ENCODE measurements at regions of chr10 and their contacts with region 1.

Region 1: DNA sequence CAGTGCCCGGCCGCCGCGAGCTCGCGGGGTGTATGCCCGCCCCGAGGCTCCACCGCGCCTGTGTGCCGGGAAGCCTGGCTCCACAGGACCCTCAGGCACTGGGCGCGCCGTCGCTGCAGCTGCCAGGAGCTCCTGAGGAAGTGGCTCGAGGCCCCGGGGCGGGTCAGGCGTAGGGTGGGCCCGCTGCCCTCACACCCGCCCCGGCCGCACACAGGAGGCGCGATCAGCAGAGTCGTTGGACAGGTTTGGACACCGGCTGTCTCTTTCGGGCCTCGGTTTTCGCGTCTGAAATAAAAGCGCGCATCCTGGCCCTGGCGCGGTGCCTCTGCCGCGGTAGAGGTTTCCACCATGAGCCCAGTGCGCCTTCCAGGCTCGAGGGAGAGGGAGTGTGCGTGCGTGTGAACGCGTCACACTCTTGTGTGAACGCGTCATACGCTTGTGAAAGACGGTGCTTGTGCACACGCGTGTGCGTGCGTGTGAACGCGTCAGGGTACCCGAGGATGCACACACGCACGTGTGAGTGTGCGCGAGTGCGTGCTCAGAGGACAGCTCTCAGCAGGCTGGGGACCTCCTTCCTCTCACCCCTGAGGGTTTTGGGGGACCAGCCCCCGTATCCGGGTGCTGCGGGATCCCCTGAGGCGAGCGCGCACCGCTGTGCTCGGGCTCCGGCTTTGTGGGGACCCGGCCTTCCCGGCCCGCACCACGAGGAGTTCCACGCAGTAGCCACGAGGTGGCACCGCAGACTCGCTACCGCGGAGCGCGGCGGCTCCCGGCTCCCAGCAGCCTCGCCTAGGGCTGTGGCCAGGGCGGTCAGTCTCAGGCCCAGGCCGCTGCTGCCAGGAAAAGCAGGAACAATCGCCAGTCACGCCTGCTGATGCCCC is 83.8 kb downstream of the BMS1 start:
- DNase-seq: peak; percentile 65
- H3K4me3 ChIP-seq: no peak overlapping the region
- H3K27ac ChIP-seq: no peak overlapping the region
- H3K4me1 ChIP-seq: peaks cover 2% of the 10 kb centered on the region
- H3K27me3 ChIP-seq: peaks cover 6 to 21% of the 10 kb centered on the region in 2 experiments
- CTCF ChIP-seq: peak; percentile 52 to 87
- POLR2A ChIP-seq: no peak

Region 2: GRCh38 chr10:42690449-42691360 is 175.7 kb before region 1 on chr10:
- CTCF ChIA-PET with region 1: no interaction called
- POLR2A ChIA-PET with region 1: no interaction called
- dilution Hi-C with region 1: no loop called
- intact Hi-C with region 1: no loop called
- DNase-seq: no peak
- H3K4me3 ChIP-seq: no peak overlapping the region
- H3K27ac ChIP-seq: no peak overlapping the region
- H3K4me1 ChIP-seq: no peaks in the 10 kb centered on the region
- H3K27me3 ChIP-seq: no peaks in the 10 kb centered on the region
- CTCF ChIP-seq: no peak
- POLR2A ChIP-seq: no peak

Region 3: DNA sequence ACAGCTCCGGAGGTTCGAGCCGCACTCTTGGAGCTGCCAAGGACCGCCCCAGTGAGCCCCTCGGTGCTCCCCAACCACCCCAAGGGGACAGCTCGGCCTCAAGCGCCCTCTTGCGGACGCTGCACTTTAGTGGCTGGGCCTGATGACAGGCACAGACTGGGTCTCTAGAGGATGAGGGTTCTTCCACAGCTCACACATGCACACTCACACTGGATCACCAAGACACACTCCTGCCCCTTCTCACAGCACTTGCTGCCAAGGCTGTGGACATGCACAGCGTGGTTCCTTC is 212.6 kb after region 1 on chr10:
- CTCF ChIA-PET with region 1: interaction called, 7 read pairs
- POLR2A ChIA-PET with region 1: no interaction called
- dilution Hi-C with region 1: no loop called
- intact Hi-C with region 1: loop called (anchors 1 kb)
- DNase-seq: no peak
- H3K4me3 ChIP-seq: no peak overlapping the region
- H3K27ac ChIP-seq: no peak overlapping the region
- H3K4me1 ChIP-seq: peaks cover 2% of the 10 kb centered on the region
- H3K27me3 ChIP-seq: peaks cover 17% of the 10 kb centered on the region in 2 experiments
- CTCF ChIP-seq: peak; percentile 42 to 66
- POLR2A ChIP-seq: no peak